Heart right ventricle (tissue), 16 donors: ENCODE measurements at regions of chr11 and their contacts with region 1.

Region 1: DNA sequence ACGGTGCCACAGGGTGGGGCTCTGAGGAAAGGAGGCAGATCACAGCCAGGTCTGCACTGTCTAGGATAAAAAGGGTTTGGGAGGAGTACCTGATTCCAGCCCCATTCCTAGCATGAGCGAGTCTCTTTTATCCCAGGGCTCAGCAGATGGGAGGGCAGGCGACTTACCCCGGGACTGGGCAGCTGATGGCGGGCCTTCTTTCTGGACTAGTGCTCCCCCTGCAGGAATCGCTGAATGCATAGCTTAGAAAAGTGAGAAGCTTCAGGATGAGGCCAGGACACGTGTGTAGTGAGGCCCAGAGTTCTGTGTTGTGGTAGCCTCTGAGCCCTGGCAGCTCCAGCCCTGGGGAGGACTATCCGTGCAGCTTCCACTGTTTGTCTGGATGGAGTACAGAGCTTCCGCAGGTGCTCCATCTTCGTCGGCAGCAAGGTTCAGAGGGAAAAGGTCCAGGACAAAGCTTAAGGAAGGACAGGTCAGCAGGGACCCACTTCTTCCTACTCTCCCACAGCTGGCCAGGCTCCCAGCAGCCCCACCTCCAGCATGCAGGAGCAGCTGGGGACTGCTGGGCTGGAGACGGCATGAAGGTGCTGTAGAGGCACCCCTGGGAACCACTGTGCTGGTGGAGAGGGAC is 30.4 kb downstream of the COMMD9 start:
- DNase-seq: peak; percentile 31 to 44
- ATAC-seq: peak; percentile 74 to 88 (median 85)
- H3K4me3 ChIP-seq: no peak overlapping the region
- H3K27ac ChIP-seq: no peak overlapping the region
- H3K4me1 ChIP-seq: peaks cover 0 to 9% (median 0%) of the 10 kb centered on the region in 9 donors
- H3K27me3 ChIP-seq: peaks cover 0 to 33% (median 7%) of the 10 kb centered on the region in 7 donors
- CTCF ChIP-seq: peak; percentile 19 to 71 (median 63)

Region 2: DNA sequence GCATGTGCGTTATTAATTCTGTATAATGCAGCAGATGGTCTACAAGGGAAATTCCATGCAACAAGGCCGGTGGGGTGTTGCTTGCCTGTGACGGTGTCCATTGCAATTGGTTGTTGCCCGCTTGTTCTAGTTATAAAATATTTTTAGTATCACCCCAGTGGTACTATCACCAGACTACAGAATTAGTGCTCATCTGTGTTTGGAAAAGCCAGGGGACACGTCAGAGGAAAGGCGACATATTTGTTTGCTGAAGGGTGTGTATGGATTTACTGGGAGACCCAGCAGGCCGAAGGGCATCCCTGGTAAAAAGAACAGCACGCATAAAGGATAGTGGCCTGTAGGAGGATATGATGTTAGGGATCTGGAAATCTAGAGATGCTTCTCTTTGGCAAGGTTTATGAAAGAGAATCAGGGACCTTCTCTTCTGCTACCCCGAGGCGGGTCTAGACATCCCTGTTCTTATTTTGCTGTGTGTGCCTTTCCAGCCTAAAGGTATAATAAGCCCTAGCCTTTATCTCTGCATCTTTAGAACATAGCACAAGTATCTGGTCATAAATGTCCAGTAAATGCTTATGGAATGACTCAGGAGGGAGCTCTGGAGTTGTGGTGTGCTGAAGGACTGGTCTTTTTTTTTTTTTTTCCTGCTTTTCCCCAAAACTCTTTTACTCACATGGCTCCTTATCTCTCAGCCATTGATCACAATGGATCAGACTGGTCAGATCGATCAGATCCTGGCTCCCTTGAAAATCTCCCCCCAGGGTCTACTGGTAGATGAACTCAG is 224.1 kb before region 1 on chr11:
- intact Hi-C with region 1: loop called in 2 of 10 experiments (anchors 10 kb)
- DNase-seq: no peak
- ATAC-seq: no peak
- H3K4me3 ChIP-seq: no peak overlapping the region
- H3K27ac ChIP-seq: no peak overlapping the region
- H3K4me1 ChIP-seq: peaks cover 0 to 28% (median 0%) of the 10 kb centered on the region in 9 donors
- H3K27me3 ChIP-seq: peaks cover 0 to 3% (median 0%) of the 10 kb centered on the region in 7 donors
- CTCF ChIP-seq: no peak

Region 3: DNA sequence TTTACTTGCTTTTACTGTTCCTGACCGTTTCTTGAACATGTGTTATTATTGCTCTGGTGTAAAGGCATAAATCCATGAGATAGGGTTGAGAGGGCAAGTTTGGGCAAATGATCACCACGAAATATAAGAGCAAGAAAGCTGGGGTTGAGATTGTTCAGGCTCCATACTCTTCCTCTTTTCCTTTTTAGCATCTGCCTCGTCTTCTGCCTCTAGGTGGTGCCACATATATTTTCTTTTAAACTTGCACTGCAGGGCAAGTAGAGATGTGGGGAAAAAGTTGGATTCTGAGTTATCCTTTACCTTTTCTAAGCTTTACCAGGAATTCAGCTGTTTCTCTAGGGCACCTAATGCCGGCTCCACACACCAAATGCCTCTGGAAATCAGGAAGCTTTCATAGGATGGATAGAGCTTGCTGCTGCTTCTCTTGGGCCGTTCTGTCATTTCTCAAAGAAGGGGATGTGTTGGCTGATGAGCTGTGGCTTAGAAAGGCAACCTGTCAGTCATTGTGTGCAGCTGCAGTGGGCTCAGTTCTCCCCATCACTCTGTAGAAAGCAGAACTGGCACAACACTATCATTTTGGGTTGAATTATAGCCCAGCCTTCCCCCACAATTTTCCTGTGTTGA is 216.7 kb before region 1 on chr11:
- intact Hi-C with region 1: loop called in 8 of 10 experiments (anchors 5 to 10 kb)
- DNase-seq: no peak
- ATAC-seq: peak in 2 of 8 donors; percentile 50 to 58
- H3K4me3 ChIP-seq: no peak overlapping the region
- H3K27ac ChIP-seq: no peak overlapping the region
- H3K4me1 ChIP-seq: peaks cover 0 to 7% (median 0%) of the 10 kb centered on the region in 9 donors
- H3K27me3 ChIP-seq: no peaks in the 10 kb centered on the region
- CTCF ChIP-seq: peak; percentile 15 to 64 (median 53)

Region 4: GRCh38 chr11:36149538-36150242 is 109.2 kb before region 1 on chr11:
- intact Hi-C with region 1: loop called in 2 of 10 experiments (anchors 10 kb)
- DNase-seq: peak in 1 of 2 donors; percentile 23
- ATAC-seq: peak; percentile 38 to 96 (median 64)
- H3K4me3 ChIP-seq: no peak overlapping the region
- H3K27ac ChIP-seq: peak overlapping the region in 1 of 10 donors; percentile 66
- H3K4me1 ChIP-seq: peaks cover 0 to 37% (median 4%) of the 10 kb centered on the region in 9 donors
- H3K27me3 ChIP-seq: peaks cover 0 to 16% (median 0%) of the 10 kb centered on the region in 7 donors
- CTCF ChIP-seq: peak in 5 of 9 donors; percentile 36 to 48 (median 38)

Region 5: GRCh38 chr11:36156161-36156816 is 102.6 kb before region 1 on chr11:
- intact Hi-C with region 1: loop called in 3 of 10 experiments (anchors 5 to 10 kb)
- DNase-seq: no peak
- ATAC-seq: peak in 1 of 8 donors; percentile 6
- H3K4me3 ChIP-seq: no peak overlapping the region
- H3K27ac ChIP-seq: peak overlapping the region in 8 of 10 donors; percentile 21 to 67 (median 46)
- H3K4me1 ChIP-seq: peaks cover 0 to 50% (median 24%) of the 10 kb centered on the region in 9 donors
- H3K27me3 ChIP-seq: no peaks in the 10 kb centered on the region
- CTCF ChIP-seq: no peak

Region 6: DNA sequence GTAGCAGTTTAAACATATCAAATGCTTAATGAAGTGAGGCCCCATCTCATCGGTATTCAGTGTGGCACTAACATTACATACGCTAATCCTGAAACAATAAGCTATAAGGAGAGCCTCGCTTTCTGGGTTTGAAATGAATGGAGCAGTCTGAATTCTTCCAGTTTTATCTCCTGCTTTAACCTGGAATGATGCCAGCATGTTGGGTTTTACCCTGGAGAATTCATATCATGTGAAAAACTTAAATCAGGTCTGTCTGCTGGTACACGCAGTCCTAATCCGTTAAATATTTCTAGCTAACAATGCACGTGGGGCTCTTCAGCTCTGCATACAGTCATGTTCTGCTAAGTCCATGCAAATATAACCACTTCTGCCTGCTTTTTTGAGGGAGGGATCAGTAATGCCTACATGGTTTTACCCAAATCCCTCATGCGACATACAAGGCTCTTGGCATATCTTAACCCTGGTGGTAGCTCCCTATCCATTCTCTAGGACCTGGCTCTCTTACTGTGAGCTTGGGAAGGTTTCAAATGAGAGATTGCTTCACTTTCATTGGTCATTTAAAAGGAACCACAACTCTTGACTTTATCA is 62.3 kb before region 1 on chr11:
- intact Hi-C with region 1: no loop called
- DNase-seq: peak in 1 of 2 donors; percentile 7
- ATAC-seq: peak in 5 of 8 donors; percentile 46 to 85 (median 67)
- H3K4me3 ChIP-seq: peak overlapping the region in 2 of 10 donors; percentile 4 to 5
- H3K27ac ChIP-seq: peak overlapping the region in 4 of 10 donors; percentile 20 to 48 (median 36)
- H3K4me1 ChIP-seq: peaks cover 0 to 26% (median 7%) of the 10 kb centered on the region in 9 donors
- H3K27me3 ChIP-seq: no peaks in the 10 kb centered on the region
- CTCF ChIP-seq: no peak

Region 7: GRCh38 chr11:36212564-36213392 is 46.1 kb before region 1 on chr11:
- intact Hi-C with region 1: no loop called
- DNase-seq: no peak
- ATAC-seq: peak in 2 of 8 donors; percentile 49 to 65
- H3K4me3 ChIP-seq: no peak overlapping the region
- H3K27ac ChIP-seq: no peak overlapping the region
- H3K4me1 ChIP-seq: no peaks in the 10 kb centered on the region
- H3K27me3 ChIP-seq: peaks cover 0 to 3% (median 0%) of the 10 kb centered on the region in 7 donors
- CTCF ChIP-seq: no peak